ENCODE measurements at regions of chr17 and their contacts with region 1.

Region 1: GRCh38 chr17:72725433-72726068 is 366.9 kb downstream of the SLC39A11 start:
- DNase-seq: no peak
- ATAC-seq: peak; percentile 59
- H3K4me3 ChIP-seq: no peak overlapping the region
- H3K27ac ChIP-seq: no peak overlapping the region
- H3K4me1 ChIP-seq: peaks cover 18% of the 10 kb centered on the region
- H3K27me3 ChIP-seq: no peaks in the 10 kb centered on the region
- CTCF ChIP-seq: peak; percentile 62 to 87 (median 75)
- EP300 ChIP-seq: no peak
- POLR2A ChIP-seq: no peak
- RAD21 ChIP-seq: peak; percentile 84

Region 2: GRCh38 chr17:72370819-72371218 is 354.7 kb before region 1 on chr17:
- CTCF ChIA-PET with region 1: no interaction called
- POLR2A ChIA-PET with region 1: no interaction called
- RAD21 ChIA-PET with region 1: no interaction called
- SMC1A ChIA-PET with region 1: no interaction called
- in situ Hi-C with region 1: no loop called
- intact Hi-C with region 1: no loop called
- DNase-seq: no peak
- ATAC-seq: no peak
- H3K4me3 ChIP-seq: no peak overlapping the region
- H3K27ac ChIP-seq: no peak overlapping the region
- H3K4me1 ChIP-seq: no peaks in the 10 kb centered on the region
- H3K27me3 ChIP-seq: no peaks in the 10 kb centered on the region
- CTCF ChIP-seq: no peak
- EP300 ChIP-seq: no peak
- POLR2A ChIP-seq: no peak
- RAD21 ChIP-seq: no peak

Region 3: GRCh38 chr17:72569148-72569946 is 156.2 kb before region 1 on chr17:
- CTCF ChIA-PET with region 1: interaction called, 527 read pairs
- POLR2A ChIA-PET with region 1: no interaction called
- RAD21 ChIA-PET with region 1: interaction called, 271 read pairs
- SMC1A ChIA-PET with region 1: interaction called, 349 read pairs
- in situ Hi-C with region 1: no loop called
- intact Hi-C with region 1: no loop called
- DNase-seq: no peak
- ATAC-seq: peak; percentile 12; the same call in 1 of the 3 replicates
- H3K4me3 ChIP-seq: no peak overlapping the region
- H3K27ac ChIP-seq: no peak overlapping the region
- H3K4me1 ChIP-seq: no peaks in the 10 kb centered on the region
- H3K27me3 ChIP-seq: no peaks in the 10 kb centered on the region; a peak in 1 of 4 replicates
- CTCF ChIP-seq: no peak
- EP300 ChIP-seq: no peak
- POLR2A ChIP-seq: no peak
- RAD21 ChIP-seq: no peak

Region 4: GRCh38 chr17:72699545-72699944 is 26.0 kb before region 1 on chr17:
- CTCF ChIA-PET with region 1: interaction called, 25 read pairs
- POLR2A ChIA-PET with region 1: interaction called, 10 read pairs
- RAD21 ChIA-PET with region 1: interaction called, 4 read pairs
- SMC1A ChIA-PET with region 1: interaction called, 5 read pairs
- in situ Hi-C with region 1: no loop called
- intact Hi-C with region 1: no loop called
- DNase-seq: no peak
- ATAC-seq: no peak
- H3K4me3 ChIP-seq: no peak overlapping the region
- H3K27ac ChIP-seq: no peak overlapping the region
- H3K4me1 ChIP-seq: no peaks in the 10 kb centered on the region
- H3K27me3 ChIP-seq: no peaks in the 10 kb centered on the region
- CTCF ChIP-seq: no peak
- EP300 ChIP-seq: no peak
- POLR2A ChIP-seq: no peak
- RAD21 ChIP-seq: no peak

Region 5: DNA sequence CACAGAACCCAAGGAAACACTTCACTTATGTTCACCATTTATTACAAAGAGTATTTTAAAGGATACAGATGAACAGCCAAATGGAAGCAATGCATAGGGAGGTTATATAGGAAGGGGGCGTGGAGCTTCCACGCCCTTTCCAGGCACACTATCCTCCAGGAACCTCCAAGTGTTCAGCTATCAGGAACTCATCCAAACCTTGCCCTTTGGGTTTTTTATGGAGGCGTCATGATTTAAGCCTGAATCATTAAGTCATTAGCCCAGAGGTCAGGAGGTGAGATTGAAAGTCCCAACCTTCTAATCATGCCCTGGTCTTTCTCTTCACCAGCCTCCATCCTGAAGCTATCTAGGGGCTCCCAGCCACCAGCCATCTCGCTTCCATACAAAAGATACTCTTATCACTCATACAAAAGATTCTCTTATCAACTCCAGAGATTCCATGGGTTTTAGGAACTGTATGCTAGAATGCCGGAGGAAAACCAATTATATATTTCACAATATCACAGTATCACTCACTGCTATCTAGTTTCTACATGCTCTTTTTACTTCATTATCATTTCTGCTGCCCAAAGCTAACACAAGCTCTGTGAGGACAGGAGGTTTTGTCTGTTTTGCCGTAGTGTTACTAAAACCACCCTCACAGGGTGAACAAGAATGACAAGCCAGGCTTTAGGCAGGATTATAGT is 153.6 kb after region 1 on chr17:
- CTCF ChIA-PET with region 1: no interaction called
- POLR2A ChIA-PET with region 1: no interaction called
- RAD21 ChIA-PET with region 1: no interaction called
- SMC1A ChIA-PET with region 1: no interaction called
- in situ Hi-C with region 1: no loop called
- intact Hi-C with region 1: no loop called
- DNase-seq: no peak
- ATAC-seq: no peak
- H3K4me3 ChIP-seq: no peak overlapping the region
- H3K27ac ChIP-seq: no peak overlapping the region
- H3K4me1 ChIP-seq: no peaks in the 10 kb centered on the region
- H3K27me3 ChIP-seq: no peaks in the 10 kb centered on the region
- CTCF ChIP-seq: no peak
- EP300 ChIP-seq: no peak
- POLR2A ChIP-seq: no peak
- RAD21 ChIP-seq: no peak

Region 6: DNA sequence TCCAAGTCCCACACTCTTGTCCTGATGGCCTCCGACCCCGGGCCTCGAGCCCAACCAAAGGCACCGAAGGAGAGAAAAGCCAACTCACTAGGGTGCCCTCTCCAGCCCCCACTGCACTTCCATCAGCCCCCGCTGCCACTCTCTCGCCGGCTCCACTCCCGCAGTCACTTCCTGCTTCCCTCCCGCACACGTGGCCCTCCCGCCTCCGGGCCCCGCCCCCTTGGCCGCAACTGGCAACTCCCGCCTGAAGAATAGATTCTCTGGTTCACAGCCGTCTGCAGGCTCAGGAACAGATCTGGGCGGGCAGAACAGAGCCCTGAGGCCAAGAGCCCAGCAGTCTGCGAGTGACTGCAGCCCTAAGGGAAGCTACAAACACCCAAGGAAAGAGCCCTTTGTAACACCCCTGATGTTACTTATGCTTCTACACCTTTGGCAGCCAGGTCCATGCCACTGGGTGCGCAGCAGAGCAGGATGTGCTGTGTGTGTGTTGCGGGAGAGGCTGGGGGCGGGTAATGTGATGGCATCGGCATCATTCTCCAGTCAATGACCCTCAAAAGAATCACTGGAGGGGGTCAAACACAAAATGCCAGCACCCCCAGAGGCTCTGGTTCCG is 367.1 kb after region 1 on chr17 and contains the start of gene SLC39A11:
- CTCF ChIA-PET with region 1: interaction called, 4 read pairs
- POLR2A ChIA-PET with region 1: no interaction called
- RAD21 ChIA-PET with region 1: interaction called, 6 read pairs
- SMC1A ChIA-PET with region 1: interaction called, 4 read pairs
- in situ Hi-C with region 1: no loop called
- intact Hi-C with region 1: loop called (anchors 5 kb)
- DNase-seq: peak; percentile 67
- ATAC-seq: peak; percentile 98
- H3K4me3 ChIP-seq: peak within 1 kb of the TSS; percentile 99
- H3K27ac ChIP-seq: peak within 1 kb of the TSS; percentile 68
- H3K4me1 ChIP-seq: peaks cover 7% of the 10 kb centered on the region; the same call in 1 of the 2 replicates
- H3K27me3 ChIP-seq: no peaks in the 10 kb centered on the region
- CTCF ChIP-seq: no peak
- EP300 ChIP-seq: no peak
- POLR2A ChIP-seq: peak; percentile 94
- RAD21 ChIP-seq: no peak
- polyA plus RNA-seq, gene SLC39A11: 8.6 to 11.7 TPM

Region 7: DNA sequence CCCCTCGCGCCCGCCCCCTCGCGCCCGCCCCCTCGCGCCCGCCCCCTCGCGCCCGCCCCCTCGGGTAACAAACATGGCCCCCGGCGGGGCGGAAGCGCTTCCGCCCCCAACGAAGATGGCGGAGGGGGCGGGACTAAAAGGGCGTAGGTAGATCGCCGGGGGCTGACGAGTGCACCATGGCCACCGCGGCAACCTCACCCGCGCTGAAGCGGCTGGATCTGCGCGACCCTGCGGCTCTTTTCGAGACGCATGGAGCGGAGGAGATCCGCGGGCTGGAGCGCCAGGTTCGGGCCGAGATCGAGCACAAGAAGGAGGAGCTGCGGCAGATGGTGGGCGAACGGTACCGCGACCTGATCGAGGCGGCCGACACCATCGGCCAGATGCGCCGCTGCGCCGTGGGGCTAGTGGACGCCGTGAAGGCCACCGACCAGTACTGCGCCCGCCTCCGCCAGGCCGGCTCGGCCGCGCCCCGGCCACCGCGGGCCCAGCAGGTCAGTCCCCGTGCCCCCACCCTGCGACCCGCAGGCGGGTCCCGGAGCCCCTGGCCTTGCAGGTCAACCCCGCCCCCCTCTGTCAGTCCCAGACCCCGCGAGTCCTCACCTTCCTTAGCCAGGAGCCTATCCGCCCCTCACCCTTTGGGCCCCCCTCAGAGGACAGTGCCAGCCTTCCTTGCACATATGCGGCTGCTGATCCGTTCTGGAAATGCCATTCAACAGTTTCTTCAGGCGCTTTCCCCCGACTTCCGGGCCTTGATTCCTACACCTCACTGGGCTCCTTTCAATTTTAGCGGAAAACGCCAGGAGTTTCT is 467.5 kb after region 1 on chr17 and contains the start of gene COG1:
- CTCF ChIA-PET with region 1: interaction called, 219 read pairs
- POLR2A ChIA-PET with region 1: interaction called, 5 read pairs
- RAD21 ChIA-PET with region 1: interaction called, 137 read pairs
- SMC1A ChIA-PET with region 1: interaction called, 134 read pairs
- in situ Hi-C with region 1: loop called (anchors 5 kb)
- intact Hi-C with region 1: loop called (anchors 1 kb)
- DNase-seq: no peak
- ATAC-seq: peak; percentile 85
- H3K4me3 ChIP-seq: peak within 1 kb of the TSS; percentile 76
- H3K27ac ChIP-seq: peak within 1 kb of the TSS; percentile 86
- H3K4me1 ChIP-seq: no peaks in the 10 kb centered on the region
- H3K27me3 ChIP-seq: no peaks in the 10 kb centered on the region
- CTCF ChIP-seq: no peak
- EP300 ChIP-seq: no peak
- POLR2A ChIP-seq: peak; percentile 80
- RAD21 ChIP-seq: no peak
- polyA plus RNA-seq, gene COG1: 10.5 to 11.4 TPM

Region 8: DNA sequence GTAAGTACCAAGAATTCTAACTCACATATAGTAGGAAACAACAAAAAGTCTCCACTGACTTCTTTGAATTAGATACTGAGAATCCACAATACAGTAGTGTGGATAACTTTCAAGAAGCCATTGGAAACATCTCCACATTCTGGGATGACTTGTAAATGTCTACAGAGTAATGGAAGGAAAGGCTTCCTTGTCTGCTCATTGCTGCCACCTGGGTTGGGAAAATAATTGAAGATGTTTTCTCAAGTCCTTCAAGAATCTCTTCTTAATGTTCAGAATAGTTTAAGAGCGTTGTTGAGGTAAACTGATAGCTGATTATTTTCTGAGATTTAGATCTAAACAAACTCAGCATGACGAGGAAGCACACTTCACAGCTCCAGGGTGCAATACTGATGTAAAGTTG is 522.2 kb after region 1 on chr17:
- CTCF ChIA-PET with region 1: interaction called, 77 read pairs
- POLR2A ChIA-PET with region 1: no interaction called
- RAD21 ChIA-PET with region 1: interaction called, 47 read pairs
- SMC1A ChIA-PET with region 1: interaction called, 115 read pairs
- in situ Hi-C with region 1: no loop called
- intact Hi-C with region 1: no loop called
- DNase-seq: no peak
- ATAC-seq: no peak
- H3K4me3 ChIP-seq: no peak overlapping the region
- H3K27ac ChIP-seq: no peak overlapping the region
- H3K4me1 ChIP-seq: no peaks in the 10 kb centered on the region
- H3K27me3 ChIP-seq: no peaks in the 10 kb centered on the region
- CTCF ChIP-seq: peak in 1 of 3 experiments; percentile 32; a peak in 1 of 6 replicates
- EP300 ChIP-seq: no peak
- POLR2A ChIP-seq: no peak
- RAD21 ChIP-seq: no peak

Region 9: GRCh38 chr17:73371285-73371684 is 645.7 kb after region 1 on chr17:
- CTCF ChIA-PET with region 1: interaction called, 88 read pairs
- POLR2A ChIA-PET with region 1: no interaction called
- RAD21 ChIA-PET with region 1: interaction called, 75 read pairs
- SMC1A ChIA-PET with region 1: interaction called, 56 read pairs
- in situ Hi-C with region 1: loop called (anchors 5 kb)
- intact Hi-C with region 1: loop called (anchors 5 kb)
- DNase-seq: no peak
- ATAC-seq: no peak
- H3K4me3 ChIP-seq: no peak overlapping the region
- H3K27ac ChIP-seq: no peak overlapping the region
- H3K4me1 ChIP-seq: no peaks in the 10 kb centered on the region
- H3K27me3 ChIP-seq: peaks cover 0 to 4% of the 10 kb centered on the region in 2 experiments
- CTCF ChIP-seq: no peak
- EP300 ChIP-seq: no peak
- POLR2A ChIP-seq: no peak
- RAD21 ChIP-seq: no peak

Measured in GM12878 (cell line).